GM10248 (cell line): ENCODE measurements at regions of chr5 and their contacts with region 1.

Region 1: DNA sequence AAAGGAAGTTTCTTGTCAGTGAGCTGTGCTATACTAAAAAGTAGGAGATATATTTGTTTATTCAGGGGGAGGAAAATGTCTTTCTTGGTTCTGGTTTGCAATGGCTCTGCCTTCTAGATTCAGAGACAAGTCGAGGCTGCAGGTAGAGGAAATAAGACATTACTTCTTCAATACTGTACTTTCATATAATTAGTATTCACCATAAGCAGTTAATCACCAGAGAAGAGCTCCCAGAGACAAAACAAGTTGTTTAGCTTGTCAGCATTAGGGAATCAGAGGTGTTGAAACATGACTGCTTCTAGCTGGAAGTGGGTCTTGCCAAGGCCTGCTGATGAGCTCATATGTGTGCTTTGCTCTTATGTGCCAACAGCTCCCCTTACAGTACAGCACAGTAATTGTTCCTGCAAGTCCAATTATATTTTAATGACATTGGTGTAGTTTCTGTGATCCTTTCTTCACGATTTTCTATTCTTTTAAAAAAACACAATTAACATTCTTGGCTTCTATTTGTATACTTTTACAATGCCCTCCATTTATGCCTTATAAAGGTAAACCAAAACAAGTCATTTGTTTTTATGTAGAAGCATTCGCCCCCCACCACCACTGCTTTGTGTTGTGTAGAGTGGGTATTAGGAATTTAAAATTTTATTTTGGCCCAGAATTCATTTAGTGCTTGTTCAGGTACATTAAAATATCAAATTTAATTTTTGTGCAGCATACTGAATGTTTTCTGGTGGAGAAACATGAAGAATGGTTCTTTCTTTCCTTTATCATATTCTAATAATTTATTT is 112.2 kb downstream of the RPS23 start:
- DNase-seq: peak; percentile 29
- CTCF ChIP-seq: peak; percentile 81

Region 2: DNA sequence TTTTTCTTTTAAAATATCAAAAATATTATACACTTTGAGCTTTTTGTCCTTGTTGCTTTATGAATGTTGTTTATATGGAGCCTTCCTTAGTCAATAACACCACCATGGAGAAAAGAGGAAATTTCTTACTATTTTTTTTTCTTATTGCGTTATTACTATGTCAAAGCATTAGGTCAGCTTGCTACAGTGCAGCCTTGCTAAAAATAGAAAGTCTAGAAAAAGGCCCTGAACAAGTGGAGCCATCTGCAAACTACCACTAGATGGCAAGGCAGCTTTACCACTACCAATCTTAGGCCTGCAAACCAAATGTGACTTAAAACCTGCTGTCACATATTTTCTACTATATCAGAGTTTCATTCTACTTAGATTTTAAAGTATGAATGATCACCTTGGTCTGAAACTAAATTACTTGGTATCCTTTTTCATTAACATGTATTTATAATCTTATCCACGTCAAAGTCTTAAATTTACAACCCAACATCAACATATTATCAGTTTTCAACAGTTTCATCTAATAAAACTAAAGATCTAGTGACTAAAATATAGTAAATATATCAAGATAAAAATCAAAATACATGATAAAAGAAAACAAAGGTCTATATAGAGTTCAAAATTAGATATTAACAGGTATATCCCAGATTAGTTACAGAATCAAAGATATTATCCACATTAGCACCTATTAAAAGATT is 658.9 kb before region 1 on chr5:
- CTCF ChIA-PET with region 1: interaction called, 12 read pairs
- POLR2A ChIA-PET with region 1: no interaction called
- DNase-seq: peak; percentile 77
- CTCF ChIP-seq: peak; percentile 76

Region 3: DNA sequence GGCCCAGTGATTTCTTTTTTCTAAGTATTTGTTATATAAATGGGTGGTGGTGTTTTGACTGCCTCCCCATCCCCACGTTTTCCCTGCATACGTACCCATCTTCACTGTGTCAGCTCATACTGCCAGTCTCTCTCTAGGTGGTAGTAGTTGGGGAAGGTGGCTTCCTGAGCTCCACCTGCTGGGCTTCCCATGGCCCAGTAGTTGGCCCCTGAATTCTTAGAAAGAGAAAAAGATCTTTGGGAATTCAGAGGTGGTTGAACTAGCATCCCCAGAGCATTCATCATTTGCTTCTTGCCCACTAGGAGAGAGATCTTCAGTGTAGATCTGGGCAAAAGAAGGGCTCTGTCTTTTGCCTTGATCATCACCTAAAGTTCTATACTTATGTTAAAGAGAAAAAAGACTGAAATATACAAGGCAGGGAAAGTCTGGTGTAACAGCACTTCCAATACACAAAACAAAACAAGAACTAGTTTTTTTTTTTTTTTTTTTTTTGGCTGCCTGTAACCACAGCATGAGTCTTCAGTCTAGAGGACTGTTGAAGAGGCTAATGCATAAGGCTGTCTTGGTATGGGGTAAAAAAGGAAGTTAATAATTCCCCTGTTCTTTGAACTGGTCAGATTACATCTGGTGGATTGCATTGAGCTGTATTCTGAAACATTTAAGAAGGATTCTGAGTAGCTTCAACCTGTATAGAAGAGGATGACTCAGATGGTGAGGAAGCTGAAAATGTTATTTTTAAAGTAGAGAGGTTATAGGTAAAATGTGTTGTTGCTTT is 65.4 kb before region 1 on chr5:
- CTCF ChIA-PET with region 1: interaction called, 24 read pairs
- POLR2A ChIA-PET with region 1: no interaction called
- DNase-seq: peak; percentile 52
- CTCF ChIP-seq: no peak

Region 4: DNA sequence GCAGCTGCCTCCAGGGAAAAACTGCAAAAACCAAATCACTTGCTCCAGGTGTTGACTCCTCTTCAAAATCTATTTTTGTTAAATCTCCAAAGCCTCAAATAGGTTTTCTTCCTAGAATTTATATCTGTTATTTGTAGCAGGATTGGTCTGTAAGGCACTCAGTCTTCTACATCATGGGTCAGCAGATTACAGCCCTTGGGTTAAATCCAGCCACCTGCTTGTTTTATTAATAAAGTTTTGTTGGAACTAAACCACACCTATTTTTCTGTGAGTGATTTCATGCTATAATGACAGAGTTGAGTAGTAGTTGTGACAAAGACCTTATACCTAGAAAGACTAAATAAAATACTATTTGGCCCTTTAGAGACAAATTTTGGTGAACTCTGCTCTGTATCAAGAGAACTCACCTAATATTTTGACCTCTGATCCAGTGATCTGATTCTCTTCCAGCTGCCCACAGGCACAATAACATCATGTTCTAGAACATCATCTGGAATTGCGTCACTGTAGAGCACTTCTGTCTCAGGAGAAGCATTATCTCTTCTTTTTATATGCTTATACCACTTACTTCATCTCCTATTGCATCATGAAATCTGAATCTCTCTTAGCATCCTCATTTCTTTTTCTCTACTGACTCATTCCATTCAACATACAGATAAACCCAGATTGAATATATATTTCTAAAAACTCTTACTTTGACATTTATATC is 17.9 kb before region 1 on chr5:
- CTCF ChIA-PET with region 1: interaction called, 18 read pairs
- POLR2A ChIA-PET with region 1: no interaction called
- DNase-seq: no peak
- CTCF ChIP-seq: no peak